Activated CD4-positive, alpha-beta memory T cell treated with anti-CD3 and anti-CD28 coated beads for 36 hours (primary cell): ENCODE measurements at regions of chr11 and their contacts with region 1.

Region 1: GRCh38 chr11:63938479-63939396 is at the start of gene NAA40:
- DNase-seq: peak; percentile 95
- H3K4me3 Mint-ChIP-seq: peak within 1 kb of the TSS; percentile 85
- H3K27ac Mint-ChIP-seq: peak within 1 kb of the TSS; percentile 54
- H3K4me1 Mint-ChIP-seq: peaks cover 23% of the 10 kb centered on the region
- H3K27me3 Mint-ChIP-seq: no peaks in the 10 kb centered on the region
- total RNA-seq, gene NAA40: 15.4 to 17.3 TPM

Region 2: DNA sequence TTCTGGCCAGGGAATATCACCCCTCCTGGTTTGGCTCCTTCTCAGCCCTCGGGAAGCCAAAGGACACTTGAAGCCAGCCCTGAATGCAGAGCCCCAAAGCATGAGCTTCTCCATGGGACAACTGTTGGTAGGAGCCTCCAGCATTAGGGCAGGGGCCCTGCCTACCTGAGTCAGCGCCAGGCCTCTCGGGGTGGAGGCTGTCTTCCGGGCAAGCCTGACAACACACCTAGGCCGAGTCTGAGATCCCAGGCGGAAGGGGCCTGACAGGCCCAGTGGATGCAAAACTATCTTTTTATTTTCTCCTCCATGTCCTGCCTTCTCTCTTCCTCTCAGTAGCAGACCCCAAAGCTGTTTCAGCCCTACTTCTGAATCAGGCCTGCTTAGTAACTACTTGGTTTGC is 49.4 kb before region 1 on chr11:
- CTCF ChIA-PET with region 1: no interaction called
- POLR2A ChIA-PET with region 1: no interaction called
- intact Hi-C with region 1: no loop called
- DNase-seq: no peak
- H3K4me3 Mint-ChIP-seq: peak overlapping the region; percentile 81
- H3K27ac Mint-ChIP-seq: peak overlapping the region; percentile 85
- H3K4me1 Mint-ChIP-seq: peaks cover 63% of the 10 kb centered on the region
- H3K27me3 Mint-ChIP-seq: no peaks in the 10 kb centered on the region

Region 3: GRCh38 chr11:63916837-63917691 is 21.7 kb before region 1 on chr11 and contains the start of gene RCOR2:
- CTCF ChIA-PET with region 1: interaction called, 3 read pairs
- POLR2A ChIA-PET with region 1: no interaction called
- intact Hi-C with region 1: loop called (anchors 2 kb)
- DNase-seq: peak; percentile 71
- H3K4me3 Mint-ChIP-seq: peak within 1 kb of the TSS; percentile 76
- H3K27ac Mint-ChIP-seq: no peak within 1 kb of the TSS
- H3K4me1 Mint-ChIP-seq: peaks cover 16% of the 10 kb centered on the region
- H3K27me3 Mint-ChIP-seq: no peaks in the 10 kb centered on the region
- total RNA-seq, gene RCOR2: 0.21 to 0.27 TPM

Region 4: DNA sequence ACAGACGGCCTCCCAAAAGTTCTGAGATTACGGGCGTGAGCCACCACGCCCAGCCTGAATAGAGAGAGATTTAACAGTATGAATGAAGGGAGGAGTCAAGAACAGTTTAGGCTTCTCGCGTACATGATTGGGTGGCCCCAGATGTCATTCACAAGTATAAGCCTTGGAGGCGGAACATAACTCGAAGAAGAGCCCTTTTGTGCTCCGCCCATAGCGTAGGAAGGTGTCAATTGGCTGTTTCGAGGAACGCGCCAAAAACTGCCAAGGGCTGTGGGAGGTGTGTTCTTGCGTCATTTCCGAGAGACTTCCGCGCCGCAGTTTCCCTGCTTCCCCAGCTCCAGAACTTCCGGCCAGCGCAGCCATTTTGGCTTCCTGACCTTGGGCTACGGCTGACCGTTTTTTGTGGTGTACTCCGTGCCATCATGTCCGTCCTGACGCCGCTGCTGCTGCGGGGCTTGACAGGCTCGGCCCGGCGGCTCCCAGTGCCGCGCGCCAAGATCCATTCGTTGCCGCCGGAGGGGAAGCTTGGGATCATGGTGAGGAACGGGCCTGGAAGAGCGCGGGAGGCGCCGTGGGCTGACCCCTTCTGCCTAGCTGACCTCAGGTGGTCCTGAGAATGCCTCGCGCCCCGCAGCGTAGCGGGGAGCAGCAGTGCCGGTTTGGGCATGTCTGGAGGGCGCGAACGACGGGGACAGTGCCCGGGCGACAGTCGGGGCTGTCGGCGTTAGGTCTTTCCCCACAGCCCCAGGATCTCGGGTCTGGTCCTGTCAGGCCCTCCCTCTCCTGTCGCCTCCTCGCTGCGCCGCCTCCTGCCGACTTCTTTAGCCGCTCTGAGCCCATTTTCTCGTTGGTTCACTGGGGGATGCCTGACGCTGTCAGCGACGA is 35.8 kb after region 1 on chr11 and contains the start of gene COX8A:
- CTCF ChIA-PET with region 1: interaction called, 3 read pairs
- POLR2A ChIA-PET with region 1: no interaction called
- intact Hi-C with region 1: loop called (anchors 1 kb)
- DNase-seq: peak; percentile 98
- H3K4me3 Mint-ChIP-seq: peak within 1 kb of the TSS; percentile 100
- H3K27ac Mint-ChIP-seq: peak within 1 kb of the TSS; percentile 98
- H3K4me1 Mint-ChIP-seq: peaks cover 21% of the 10 kb centered on the region
- H3K27me3 Mint-ChIP-seq: no peaks in the 10 kb centered on the region
- total RNA-seq, gene COX8A: 559 to 581 TPM

Region 5: GRCh38 chr11:64165849-64166635 is 227.3 kb after region 1 on chr11 and contains the start of gene MACROD1:
- CTCF ChIA-PET with region 1: no interaction called
- POLR2A ChIA-PET with region 1: no interaction called
- intact Hi-C with region 1: no loop called
- DNase-seq: peak; percentile 88
- H3K4me3 Mint-ChIP-seq: peak within 1 kb of the TSS; percentile 87
- H3K27ac Mint-ChIP-seq: peak within 1 kb of the TSS; percentile 74
- H3K4me1 Mint-ChIP-seq: peaks cover 15% of the 10 kb centered on the region
- H3K27me3 Mint-ChIP-seq: no peaks in the 10 kb centered on the region
- total RNA-seq, gene MACROD1: 24.5 to 31.0 TPM